Activated naive CD4-positive, alpha-beta T cell treated with anti-CD3 and anti-CD28 coated beads for 36 hours (primary cell): ENCODE measurements at regions of chr5 and their contacts with region 1.

Region 1: GRCh38 chr5:143229896-143230675 is 173.4 kb downstream of the NR3C1 start:
- DNase-seq: peak; percentile 74
- H3K4me3 Mint-ChIP-seq: peak overlapping the region; percentile 46
- H3K27ac Mint-ChIP-seq: peak overlapping the region; percentile 69
- H3K4me1 Mint-ChIP-seq: peaks cover 24% of the 10 kb centered on the region
- H3K27me3 Mint-ChIP-seq: no peaks in the 10 kb centered on the region

Region 2: DNA sequence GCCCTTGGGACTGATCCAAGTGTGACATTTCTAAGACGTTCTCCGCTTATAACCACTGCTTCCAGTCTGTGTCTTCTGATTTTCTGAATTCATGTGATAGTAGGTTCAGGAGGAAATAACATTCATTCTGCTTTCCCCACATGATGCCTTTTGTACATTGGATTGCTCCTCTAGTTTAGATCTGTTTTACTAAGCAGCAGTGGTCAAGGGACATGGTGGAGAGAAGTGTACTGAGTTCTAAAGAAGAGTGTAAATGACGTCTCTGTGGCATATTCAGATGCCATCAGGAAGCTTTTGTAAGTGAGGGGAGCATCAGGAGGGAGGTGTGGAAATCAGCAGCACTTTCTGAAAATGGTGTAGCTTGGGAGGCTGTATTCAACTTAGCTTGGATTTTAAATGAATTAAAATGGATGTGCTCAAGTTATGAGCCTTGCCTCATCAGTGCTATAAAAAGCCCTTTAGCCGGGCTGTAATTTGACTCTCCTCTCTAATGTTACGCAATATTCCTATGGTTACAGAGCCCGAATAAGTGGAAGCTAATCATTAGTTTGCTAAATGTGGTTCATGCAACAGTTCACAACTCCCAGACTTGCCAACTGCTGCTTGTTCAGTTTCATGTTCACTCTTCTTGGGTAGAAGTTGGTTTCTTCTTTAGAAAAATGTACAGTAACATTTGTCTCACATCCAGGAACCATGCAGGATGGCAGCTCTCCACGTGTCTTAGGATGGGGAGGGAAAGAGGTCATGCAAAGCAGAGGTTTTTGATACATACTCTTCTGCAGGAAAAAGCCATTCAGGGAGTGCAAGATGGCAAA is 178.6 kb before region 1 on chr5:
- CTCF ChIA-PET with region 1: no interaction called
- intact Hi-C with region 1: loop called (anchors 1 kb)
- DNase-seq: no peak
- H3K4me3 Mint-ChIP-seq: no peak overlapping the region
- H3K27ac Mint-ChIP-seq: no peak overlapping the region
- H3K4me1 Mint-ChIP-seq: peaks cover 67% of the 10 kb centered on the region
- H3K27me3 Mint-ChIP-seq: no peaks in the 10 kb centered on the region

Region 3: GRCh38 chr5:143182901-143183820 is 46.9 kb before region 1 on chr5:
- CTCF ChIA-PET with region 1: no interaction called
- intact Hi-C with region 1: no loop called
- DNase-seq: peak; percentile 73
- H3K4me3 Mint-ChIP-seq: no peak overlapping the region
- H3K27ac Mint-ChIP-seq: peak overlapping the region; percentile 68
- H3K4me1 Mint-ChIP-seq: peaks cover 29% of the 10 kb centered on the region
- H3K27me3 Mint-ChIP-seq: no peaks in the 10 kb centered on the region

Region 4: DNA sequence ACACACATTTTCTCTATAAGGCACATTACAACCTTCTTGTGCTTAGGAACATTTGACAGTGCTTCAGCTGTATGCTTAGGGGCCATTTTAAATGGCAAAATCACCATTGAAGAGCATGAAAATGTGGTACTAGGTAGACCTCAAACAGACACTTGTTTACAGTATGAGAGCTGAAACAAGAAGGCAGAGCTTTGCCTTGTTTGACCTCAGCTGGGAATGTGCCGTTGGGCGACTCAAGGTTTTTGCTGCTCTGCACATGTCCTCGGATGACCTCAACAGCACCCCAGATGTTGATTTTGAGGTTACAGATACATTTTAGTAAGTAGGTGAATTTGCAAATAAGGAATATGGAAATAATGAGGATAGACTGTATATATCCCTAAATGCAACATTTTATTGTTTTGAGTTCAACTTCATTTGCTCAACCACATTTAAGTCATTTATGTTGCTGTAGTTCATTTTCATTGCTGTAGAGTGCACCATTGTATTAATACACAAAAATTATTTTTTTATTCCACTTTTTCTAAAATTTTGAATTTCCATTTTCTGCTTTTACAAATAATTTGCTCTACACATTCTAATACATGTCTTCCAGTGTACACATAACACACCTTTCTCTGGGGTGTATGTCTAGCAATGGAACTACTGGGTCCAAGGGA is 33.4 kb before region 1 on chr5:
- CTCF ChIA-PET with region 1: no interaction called
- intact Hi-C with region 1: loop called (anchors 1 kb)
- DNase-seq: no peak
- H3K4me3 Mint-ChIP-seq: no peak overlapping the region
- H3K27ac Mint-ChIP-seq: peak overlapping the region; percentile 57
- H3K4me1 Mint-ChIP-seq: peaks cover 15% of the 10 kb centered on the region
- H3K27me3 Mint-ChIP-seq: no peaks in the 10 kb centered on the region